ENCODE measurements at regions of chr3 and their contacts with region 1.

Region 1: DNA sequence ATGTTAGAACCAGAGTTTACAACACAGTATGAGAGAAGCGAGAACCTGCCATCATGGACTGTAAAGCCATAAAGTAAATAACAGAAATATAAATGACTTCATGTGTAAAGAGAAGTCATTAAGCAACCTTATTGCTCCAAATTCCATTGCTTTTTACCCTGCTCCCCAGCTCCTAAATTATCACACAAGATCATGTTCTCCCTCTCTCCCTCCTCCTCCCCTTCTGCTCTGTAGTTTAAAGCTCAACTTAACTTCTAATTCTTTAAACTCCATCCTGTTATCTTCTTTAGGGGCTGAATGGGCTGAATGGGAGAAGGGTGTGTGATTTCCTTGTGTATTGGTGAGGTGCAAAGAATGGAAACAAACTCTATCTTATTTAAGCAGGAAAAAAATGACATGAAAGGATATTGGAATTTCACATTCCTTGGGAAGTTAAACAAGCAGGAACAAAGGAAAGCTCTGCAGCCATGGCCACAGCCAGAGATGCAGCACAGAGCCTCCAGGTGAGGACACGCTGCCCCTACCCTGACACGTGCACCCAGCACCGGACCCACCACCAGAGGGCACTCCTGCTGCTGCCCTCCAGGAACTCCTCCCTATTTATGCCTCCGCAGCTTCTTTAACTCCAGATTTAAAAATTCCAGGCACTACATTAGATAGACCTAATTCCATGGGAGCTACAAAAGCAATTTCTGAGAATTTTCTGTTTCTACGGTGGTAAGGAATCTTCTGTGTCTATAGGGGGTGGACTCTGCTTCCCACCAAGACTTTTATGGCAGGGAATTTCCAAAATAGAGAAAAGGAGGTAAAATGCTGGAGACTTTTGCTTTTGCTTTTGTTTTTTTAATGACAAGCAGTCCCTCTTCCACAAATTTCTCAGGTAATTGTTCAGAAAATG is 76.9 kb upstream of the ABI3BP start:
- DNase-seq: peak; percentile 43
- ATAC-seq: peak; percentile 21
- H3K4me3 ChIP-seq: no peak overlapping the region
- H3K4me3 Mint-ChIP-seq: no peak overlapping the region
- H3K27ac ChIP-seq: no peak overlapping the region
- H3K27ac Mint-ChIP-seq: no peak overlapping the region
- H3K4me1 ChIP-seq: no peaks in the 10 kb centered on the region
- H3K4me1 Mint-ChIP-seq: no peaks in the 10 kb centered on the region
- H3K27me3 ChIP-seq: peaks cover 0 to 8% (median 0%) of the 10 kb centered on the region in 4 experiments
- H3K27me3 Mint-ChIP-seq: peaks cover 13% of the 10 kb centered on the region
- CTCF ChIP-seq: peak; percentile 67

Region 2: DNA sequence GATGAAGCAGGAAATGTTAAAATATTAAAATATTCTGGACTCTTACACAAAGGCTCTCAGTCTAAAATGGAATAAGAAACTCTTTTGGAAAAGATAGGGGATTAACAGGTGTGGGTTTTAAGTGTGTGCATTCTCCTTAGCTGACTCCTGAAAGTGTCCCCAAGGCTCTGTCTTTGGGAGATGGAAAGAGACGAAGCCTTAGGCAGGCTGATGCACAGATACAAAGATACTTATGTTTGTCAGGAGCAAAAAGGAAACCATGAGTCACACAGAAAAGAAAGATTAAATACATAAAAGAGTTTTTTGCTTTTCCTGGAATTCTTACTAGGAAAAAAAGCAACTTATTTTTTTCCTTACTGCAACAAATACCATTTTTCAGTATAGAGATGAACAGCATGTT is 53.1 kb before region 1 on chr3:
- CTCF ChIA-PET with region 1: no interaction called
- POLR2A ChIA-PET with region 1: no interaction called
- intact Hi-C with region 1: no loop called
- DNase-seq: no peak
- ATAC-seq: no peak
- H3K4me3 ChIP-seq: no peak overlapping the region
- H3K4me3 Mint-ChIP-seq: no peak overlapping the region
- H3K27ac ChIP-seq: no peak overlapping the region
- H3K27ac Mint-ChIP-seq: no peak overlapping the region
- H3K4me1 ChIP-seq: no peaks in the 10 kb centered on the region
- H3K4me1 Mint-ChIP-seq: no peaks in the 10 kb centered on the region
- H3K27me3 ChIP-seq: no peaks in the 10 kb centered on the region
- H3K27me3 Mint-ChIP-seq: no peaks in the 10 kb centered on the region
- CTCF ChIP-seq: no peak

Region 3: DNA sequence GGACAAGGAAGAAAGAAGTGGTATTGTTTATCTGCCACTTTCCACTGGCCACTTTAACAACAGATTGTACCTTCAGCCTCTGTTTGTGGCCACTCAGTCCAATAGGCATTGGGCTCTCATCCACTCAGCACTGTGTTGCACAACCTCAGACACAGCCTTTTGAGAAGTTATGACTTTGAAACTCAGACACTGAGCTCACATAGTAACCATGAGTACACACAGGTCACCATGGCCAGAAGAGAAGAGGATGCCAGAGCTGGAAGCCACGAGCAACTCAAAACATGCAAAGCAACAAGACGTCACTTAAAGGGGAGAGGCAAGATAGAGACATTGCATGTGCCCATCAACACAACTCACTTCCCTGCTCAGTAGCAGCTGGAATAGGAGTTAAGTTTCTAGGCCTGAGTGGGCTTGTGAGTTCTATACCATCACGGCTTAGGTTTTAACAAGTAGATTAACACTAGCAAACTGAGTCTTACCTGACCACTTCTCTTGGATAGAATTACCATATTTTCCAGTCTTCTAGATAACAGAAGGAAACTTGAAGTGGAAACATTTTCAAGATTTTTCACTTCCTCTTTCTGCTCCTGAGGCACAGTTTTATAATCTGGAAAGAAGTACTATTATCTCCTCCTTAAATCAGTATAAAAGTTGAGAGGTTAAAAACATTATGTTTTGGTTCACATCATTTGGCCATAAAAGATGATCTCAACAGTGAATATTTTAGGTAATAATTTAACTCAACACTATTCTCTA is 146.7 kb after region 1 on chr3:
- CTCF ChIA-PET with region 1: no interaction called
- POLR2A ChIA-PET with region 1: no interaction called
- intact Hi-C with region 1: no loop called
- DNase-seq: no peak
- ATAC-seq: no peak
- H3K4me3 ChIP-seq: no peak overlapping the region
- H3K4me3 Mint-ChIP-seq: no peak overlapping the region
- H3K27ac ChIP-seq: no peak overlapping the region
- H3K27ac Mint-ChIP-seq: no peak overlapping the region
- H3K4me1 ChIP-seq: no peaks in the 10 kb centered on the region
- H3K4me1 Mint-ChIP-seq: no peaks in the 10 kb centered on the region
- H3K27me3 ChIP-seq: no peaks in the 10 kb centered on the region
- H3K27me3 Mint-ChIP-seq: no peaks in the 10 kb centered on the region
- CTCF ChIP-seq: no peak

Region 4: DNA sequence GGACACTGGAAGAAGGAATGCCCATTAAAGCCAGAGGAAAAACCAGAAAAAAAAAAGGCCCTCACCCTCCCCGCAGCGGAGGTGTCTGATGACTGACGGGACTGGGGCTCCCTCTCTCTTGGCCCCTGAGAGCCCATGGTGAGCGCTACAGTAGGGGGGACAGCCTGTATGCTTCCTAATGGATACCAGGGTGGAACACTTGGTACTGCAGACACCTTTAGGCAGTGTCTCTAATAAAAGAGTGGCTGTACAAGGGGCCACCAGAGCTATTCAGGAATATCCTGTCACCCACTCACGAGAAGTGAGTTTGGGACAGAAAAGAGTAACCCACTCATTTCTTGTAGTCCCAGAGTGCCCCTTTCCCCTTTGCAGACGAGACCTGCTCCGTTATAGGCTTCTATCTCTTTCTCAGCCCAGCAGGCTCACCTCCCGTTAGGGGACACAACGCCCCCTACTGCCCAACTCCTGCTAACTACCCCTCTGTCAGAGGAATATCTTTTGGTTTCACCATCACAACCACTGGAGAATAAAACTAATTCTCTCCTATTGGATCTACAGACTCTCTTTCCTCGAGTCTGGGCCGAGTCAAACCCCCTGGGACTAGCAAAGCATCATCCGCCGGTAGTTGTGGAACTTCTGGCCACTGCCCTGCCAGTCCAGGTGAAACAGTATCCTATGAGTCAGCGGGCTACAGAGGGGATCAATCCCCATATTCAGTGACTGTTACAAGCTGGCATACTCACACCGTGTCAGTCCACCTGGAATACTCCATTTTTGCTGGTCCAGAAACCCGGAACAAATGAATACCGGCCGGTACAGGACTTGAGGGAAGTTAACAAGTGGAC is 566.0 kb after region 1 on chr3:
- CTCF ChIA-PET with region 1: no interaction called
- POLR2A ChIA-PET with region 1: no interaction called
- intact Hi-C with region 1: loop called (anchors 5 kb)
- DNase-seq: peak; percentile 61
- ATAC-seq: peak; percentile 71
- H3K4me3 ChIP-seq: no peak overlapping the region
- H3K4me3 Mint-ChIP-seq: no peak overlapping the region
- H3K27ac ChIP-seq: no peak overlapping the region
- H3K27ac Mint-ChIP-seq: no peak overlapping the region
- H3K4me1 ChIP-seq: peaks cover 4 to 7% of the 10 kb centered on the region in 2 donors
- H3K4me1 Mint-ChIP-seq: peaks cover 3% of the 10 kb centered on the region
- H3K27me3 ChIP-seq: no peaks in the 10 kb centered on the region
- H3K27me3 Mint-ChIP-seq: no peaks in the 10 kb centered on the region
- CTCF ChIP-seq: peak; percentile 76